PC-3 (cell line): ENCODE measurements at regions of chr5 and their contacts with region 1.

Region 1: GRCh38 chr5:151223469-151224264 is at the start of gene CCDC69:
- DNase-seq: peak; percentile 77
- ATAC-seq: peak; percentile 89
- H3K4me3 ChIP-seq: peak within 1 kb of the TSS; percentile 92
- H3K27ac ChIP-seq: no peak within 1 kb of the TSS
- H3K4me1 ChIP-seq: peaks cover 19% of the 10 kb centered on the region; the same call in 1 of the 2 replicates
- H3K27me3 ChIP-seq: no peaks in the 10 kb centered on the region
- CTCF ChIP-seq: 0 out of 2 replicates have a peak, but pooled peaks have one; percentile 13
- total RNA-seq, gene CCDC69: 19.2 and 26.4 TPM in 2 replicates

Region 2: GRCh38 chr5:151183451-151184245 is 40.0 kb before region 1 on chr5:
- CTCF ChIA-PET with region 1: no interaction called
- POLR2A ChIA-PET with region 1: no interaction called
- intact Hi-C with region 1: loop called (anchors 1 kb)
- DNase-seq: peak; percentile 69
- ATAC-seq: peak; percentile 99
- H3K4me3 ChIP-seq: no peak overlapping the region
- H3K27ac ChIP-seq: peak overlapping the region; percentile 69
- H3K4me1 ChIP-seq: peaks cover 16% of the 10 kb centered on the region
- H3K27me3 ChIP-seq: no peaks in the 10 kb centered on the region
- CTCF ChIP-seq: no peak